Heart left ventricle (tissue), 16 donors: ENCODE measurements at regions of chrX and their contacts with region 1.

Region 1: DNA sequence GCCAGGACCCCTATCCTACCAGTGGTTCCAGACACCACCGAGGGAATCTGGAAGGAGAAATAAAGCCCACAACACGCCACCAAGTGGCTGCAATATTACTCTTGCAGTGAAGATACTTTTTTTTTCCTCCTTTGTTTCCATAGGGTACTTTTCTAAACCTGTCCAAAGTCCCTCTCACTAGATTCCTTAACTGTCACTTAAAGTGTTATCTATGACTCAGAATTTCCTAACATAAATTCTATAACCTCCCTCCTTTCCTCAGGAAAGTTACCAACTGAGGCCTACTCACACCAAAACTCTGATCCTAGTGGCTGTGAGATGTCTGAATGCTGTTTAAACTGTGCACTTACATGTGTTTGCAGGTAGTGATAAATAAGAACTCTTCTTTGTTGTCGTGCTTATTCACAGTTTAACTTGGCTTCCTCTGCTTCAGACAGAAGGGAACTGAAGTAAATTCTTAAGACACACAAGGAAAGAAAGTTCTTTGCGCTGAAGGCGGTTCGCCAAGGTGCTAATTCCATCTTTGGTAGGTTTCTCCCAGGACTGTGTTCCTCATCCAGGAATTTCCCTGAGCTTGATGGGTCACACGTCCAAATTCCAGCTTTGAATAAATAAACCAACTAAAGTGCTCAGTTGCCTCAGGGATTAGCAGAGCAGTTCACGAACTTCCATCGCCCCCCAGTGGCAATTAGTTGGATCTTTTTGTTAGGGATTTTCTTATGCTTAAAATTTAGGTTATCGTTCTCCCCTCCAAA is 10.7 kb upstream of the HCCS start:
- DNase-seq: peak in 2 of 5 donors; percentile 8 to 16
- ATAC-seq: peak in 2 of 4 donors; percentile 31 to 39
- H3K4me3 ChIP-seq: no peak overlapping the region
- H3K27ac ChIP-seq: peak overlapping the region in 1 of 12 donors; percentile 52
- H3K4me1 ChIP-seq: peaks cover 0 to 3% (median 0%) of the 10 kb centered on the region in 12 donors
- H3K27me3 ChIP-seq: peaks cover 0 to 3% (median 0%) of the 10 kb centered on the region in 9 donors
- CTCF ChIP-seq: peak; percentile 10 to 52 (median 36)
- POLR2A ChIP-seq: no peak

Region 2: GRCh38 chrX:10206317-10206716 is 894.1 kb before region 1 on chrX:
- intact Hi-C with region 1: loop called in 1 of 10 experiments (anchors 10 kb)
- DNase-seq: no peak
- ATAC-seq: no peak
- H3K4me3 ChIP-seq: no peak overlapping the region
- H3K27ac ChIP-seq: no peak overlapping the region
- H3K4me1 ChIP-seq: no peaks in the 10 kb centered on the region
- H3K27me3 ChIP-seq: peaks cover 0 to 3% (median 0%) of the 10 kb centered on the region in 9 donors
- CTCF ChIP-seq: no peak
- POLR2A ChIP-seq: no peak

Region 3: DNA sequence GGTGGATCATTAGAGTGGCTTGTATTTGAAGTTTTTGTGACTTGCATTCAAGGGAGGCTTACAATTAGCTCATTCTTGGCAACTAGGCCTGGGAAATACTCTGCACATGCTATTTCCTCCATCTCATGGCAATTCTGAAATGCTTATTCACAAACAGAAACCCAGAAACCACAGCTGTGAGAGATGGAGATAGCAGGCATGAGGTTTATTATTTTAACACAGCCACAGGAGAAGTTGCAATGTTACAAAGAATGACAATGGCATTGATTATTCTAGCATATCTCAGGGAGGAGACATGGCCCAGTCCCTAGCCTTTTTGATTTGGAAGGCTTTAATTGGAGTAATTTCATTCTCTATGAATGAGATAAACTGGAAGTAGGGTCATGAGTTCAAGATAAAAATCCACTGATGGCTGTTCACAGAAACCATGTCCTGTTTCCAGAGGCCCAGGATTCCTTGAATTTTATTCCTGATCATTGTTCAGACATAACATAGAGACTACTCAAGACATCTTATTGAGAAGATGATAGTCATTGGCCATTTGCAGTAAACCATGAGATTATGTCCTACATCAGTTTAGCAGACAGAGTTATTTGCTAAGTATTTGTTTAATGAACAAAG is 604.0 kb before region 1 on chrX:
- intact Hi-C with region 1: no loop called
- DNase-seq: peak in 1 of 5 donors; percentile 38
- ATAC-seq: peak; percentile 42 to 90 (median 82)
- H3K4me3 ChIP-seq: no peak overlapping the region
- H3K27ac ChIP-seq: peak overlapping the region in 8 of 12 donors; percentile 27 to 70 (median 49)
- H3K4me1 ChIP-seq: peaks cover 0 to 30% (median 1%) of the 10 kb centered on the region in 12 donors
- H3K27me3 ChIP-seq: no peaks in the 10 kb centered on the region
- CTCF ChIP-seq: no peak
- POLR2A ChIP-seq: no peak

Region 4: GRCh38 chrX:10636337-10636736 is 464.1 kb before region 1 on chrX:
- intact Hi-C with region 1: loop called in 1 of 10 experiments (anchors 10 kb)
- DNase-seq: peak in 4 of 5 donors; percentile 15 to 32 (median 26)
- ATAC-seq: peak in 3 of 4 donors; percentile 67 to 75 (median 73)
- H3K4me3 ChIP-seq: peak overlapping the region in 4 of 12 donors; percentile 3 to 26 (median 14)
- H3K27ac ChIP-seq: peak overlapping the region in 3 of 12 donors; percentile 40 to 58 (median 57)
- H3K4me1 ChIP-seq: peaks cover 0 to 12% (median 0%) of the 10 kb centered on the region in 12 donors
- H3K27me3 ChIP-seq: no peaks in the 10 kb centered on the region
- CTCF ChIP-seq: peak in 11 of 12 donors; percentile 23 to 64 (median 57)
- POLR2A ChIP-seq: no peak

Region 5: DNA sequence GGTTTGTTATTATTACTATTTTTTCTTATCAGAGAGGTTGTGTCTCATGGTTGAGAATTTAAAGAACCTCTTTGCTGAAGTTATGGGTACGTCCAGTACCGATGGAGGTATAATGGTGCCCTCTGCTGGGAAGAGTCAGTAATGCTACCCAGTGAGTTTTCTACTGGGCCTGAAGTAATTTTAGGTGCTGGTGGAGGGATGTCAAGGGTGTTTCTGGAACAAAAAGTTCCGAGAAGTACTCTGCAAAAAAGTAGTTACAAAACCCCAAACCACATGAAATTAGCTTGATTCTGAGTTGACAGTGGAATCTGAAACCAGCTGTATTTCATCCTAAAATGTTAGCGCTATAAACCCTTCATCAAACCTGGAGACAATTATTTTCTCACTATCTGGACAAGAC is 377.6 kb before region 1 on chrX:
- intact Hi-C with region 1: loop called in 1 of 10 experiments (anchors 10 kb)
- DNase-seq: peak in 3 of 5 donors; percentile 12 to 33 (median 32)
- ATAC-seq: peak; percentile 58 to 78 (median 66)
- H3K4me3 ChIP-seq: no peak overlapping the region
- H3K27ac ChIP-seq: peak overlapping the region in 1 of 12 donors; percentile 6
- H3K4me1 ChIP-seq: no peaks in the 10 kb centered on the region
- H3K27me3 ChIP-seq: no peaks in the 10 kb centered on the region
- CTCF ChIP-seq: peak; percentile 54 to 77 (median 65)
- POLR2A ChIP-seq: no peak

Region 6: DNA sequence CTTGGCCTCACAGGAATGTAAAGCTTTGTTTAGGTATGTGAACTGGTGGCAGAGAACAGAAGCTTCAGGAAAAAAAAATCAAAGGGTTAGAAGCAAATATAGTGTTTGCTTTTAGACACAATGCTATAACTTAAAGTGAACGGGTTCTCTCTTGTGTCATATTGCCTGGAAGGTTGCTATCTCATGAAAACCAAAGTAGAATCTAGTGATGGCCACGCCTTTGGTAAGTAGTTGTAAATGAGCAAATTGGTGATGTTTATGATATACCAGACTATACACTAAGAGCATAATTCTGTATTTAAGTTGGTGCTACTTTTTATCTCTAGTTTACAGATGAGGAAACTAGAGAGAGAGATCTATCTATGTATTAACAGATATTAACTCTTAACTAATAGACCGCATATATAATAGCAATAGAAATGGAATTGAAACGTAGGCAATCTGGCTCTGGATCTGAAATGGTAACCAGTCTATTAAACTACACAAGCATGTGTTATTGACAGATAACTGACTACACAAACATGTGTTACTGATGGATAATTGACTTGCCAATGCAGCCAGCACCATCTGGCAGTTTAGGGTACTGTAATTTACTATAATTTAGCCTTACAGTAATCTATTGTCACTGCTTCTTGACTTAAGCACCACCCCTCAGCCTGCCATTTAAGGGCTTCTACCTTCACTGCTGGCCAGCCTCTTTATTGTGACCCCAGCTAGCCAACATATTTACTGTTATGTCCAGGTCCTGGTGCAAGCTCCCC is 51.5 kb after region 1 on chrX:
- intact Hi-C with region 1: no loop called
- DNase-seq: no peak
- ATAC-seq: no peak
- H3K4me3 ChIP-seq: no peak overlapping the region
- H3K27ac ChIP-seq: no peak overlapping the region
- H3K4me1 ChIP-seq: no peaks in the 10 kb centered on the region
- H3K27me3 ChIP-seq: peaks cover 0 to 3% (median 0%) of the 10 kb centered on the region in 9 donors
- CTCF ChIP-seq: no peak
- POLR2A ChIP-seq: no peak